ENCODE measurements at regions of chr7 and their contacts with region 1.

Region 1: GRCh38 chr7:138002096-138002827 is 376 bp upstream of the CREB3L2 start:
- DNase-seq: peak; percentile 99 to 100 (median 100)
- H3K4me3 ChIP-seq: peak overlapping the region; percentile 80
- H3K27ac ChIP-seq: peak overlapping the region in 1 of 2 donors; percentile 95
- H3K4me1 ChIP-seq: peaks cover 3% of the 10 kb centered on the region
- H3K27me3 ChIP-seq: no peaks in the 10 kb centered on the region
- CTCF ChIP-seq: peak; percentile 85 to 88 (median 88)
- EP300 ChIP-seq: peak; percentile 64
- POLR2A ChIP-seq: no peak

Region 2: GRCh38 chr7:136293272-136293671 is 1709.0 kb before region 1 on chr7:
- intact Hi-C with region 1: no loop called
- DNase-seq: no peak
- H3K4me3 ChIP-seq: no peak overlapping the region
- H3K27ac ChIP-seq: no peak overlapping the region
- H3K4me1 ChIP-seq: no peaks in the 10 kb centered on the region
- H3K27me3 ChIP-seq: no peaks in the 10 kb centered on the region
- CTCF ChIP-seq: no peak
- EP300 ChIP-seq: no peak
- POLR2A ChIP-seq: no peak

Region 3: GRCh38 chr7:137846827-137847567 is 155.3 kb before region 1 on chr7 and contains the start of gene DGKI:
- intact Hi-C with region 1: no loop called
- DNase-seq: peak in 4 of 5 donors; percentile 5 to 43 (median 29)
- H3K4me3 ChIP-seq: peak within 1 kb of the TSS; percentile 30
- H3K27ac ChIP-seq: no peak within 1 kb of the TSS
- H3K4me1 ChIP-seq: peaks cover 6% of the 10 kb centered on the region
- H3K27me3 ChIP-seq: no peaks in the 10 kb centered on the region
- CTCF ChIP-seq: no peak
- EP300 ChIP-seq: no peak
- POLR2A ChIP-seq: no peak
- total RNA-seq, gene DGKI: 0.10 to 1.3 (median 0.13) TPM

Region 4: DNA sequence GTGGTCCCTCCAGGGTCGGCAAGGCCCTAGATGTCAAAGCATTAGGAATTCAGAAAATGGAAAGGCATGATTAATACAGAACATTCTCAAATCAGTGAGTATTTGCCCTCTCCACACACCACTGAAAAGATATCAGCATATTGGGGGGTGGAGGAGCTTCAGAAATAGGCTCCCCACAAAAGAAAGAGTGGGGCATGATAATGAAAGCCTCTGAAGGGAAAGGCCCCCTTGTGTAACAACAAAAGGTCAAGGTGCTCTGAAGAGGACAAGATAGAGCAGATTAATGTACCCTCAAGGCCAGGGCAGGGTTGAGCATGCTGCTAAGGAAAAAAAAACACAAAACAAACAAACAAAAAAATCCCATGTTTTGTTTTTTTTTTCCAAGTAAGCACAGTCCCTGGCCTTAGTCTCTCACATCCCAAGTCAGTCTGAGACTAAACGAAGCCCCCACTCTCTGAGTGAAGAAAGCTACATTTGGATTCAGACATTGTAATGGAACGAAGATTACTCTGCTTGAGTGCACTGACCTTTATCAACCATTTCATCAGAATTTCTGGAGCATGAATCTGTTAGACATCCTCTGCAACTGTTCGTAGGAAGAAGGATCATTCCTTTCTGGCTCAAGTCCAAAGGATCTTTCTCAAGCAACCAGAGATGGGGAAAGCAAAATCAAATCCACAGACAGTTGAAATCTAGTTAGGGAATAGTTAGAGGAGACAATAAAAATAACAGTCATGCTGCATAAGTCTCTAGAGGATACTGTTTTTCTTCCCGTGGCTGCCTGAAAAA is 128.1 kb before region 1 on chr7:
- intact Hi-C with region 1: no loop called
- DNase-seq: no peak
- H3K4me3 ChIP-seq: no peak overlapping the region
- H3K27ac ChIP-seq: no peak overlapping the region
- H3K4me1 ChIP-seq: peaks cover 12% of the 10 kb centered on the region
- H3K27me3 ChIP-seq: no peaks in the 10 kb centered on the region
- CTCF ChIP-seq: no peak
- EP300 ChIP-seq: no peak
- POLR2A ChIP-seq: no peak

Region 5: DNA sequence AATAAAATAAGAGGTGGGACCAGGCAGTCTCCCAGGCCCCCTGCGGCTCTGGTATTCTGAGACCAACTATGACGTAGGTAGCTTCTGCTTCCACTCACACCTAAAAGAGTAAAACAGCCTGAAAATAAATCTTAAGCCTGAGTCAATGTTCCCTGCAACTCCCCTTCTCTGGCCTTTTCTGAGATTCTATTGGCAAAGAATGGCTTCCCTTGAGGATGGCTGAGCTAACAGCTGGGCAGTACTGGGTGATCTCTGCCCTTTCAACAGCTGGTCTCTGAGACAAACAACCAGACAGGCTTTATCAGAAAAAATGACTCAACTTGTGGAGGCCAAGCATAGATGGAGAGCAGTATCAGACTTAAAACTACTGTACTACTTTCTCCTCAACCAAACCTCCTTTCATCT is 59.1 kb before region 1 on chr7:
- intact Hi-C with region 1: loop called in 2 of 4 experiments (anchors 10 kb)
- DNase-seq: peak; percentile 69 to 82 (median 77)
- H3K4me3 ChIP-seq: no peak overlapping the region
- H3K27ac ChIP-seq: peak overlapping the region in 1 of 2 donors; percentile 71
- H3K4me1 ChIP-seq: peaks cover 8% of the 10 kb centered on the region
- H3K27me3 ChIP-seq: no peaks in the 10 kb centered on the region
- CTCF ChIP-seq: no peak
- EP300 ChIP-seq: no peak
- POLR2A ChIP-seq: no peak

Measured in ovary (tissue), 10 donors.